ENCODE measurements at regions of chr22 and their contacts with region 1.

Region 1: GRCh38 chr22:31080848-31081649 is at the start of gene SMTN:
- DNase-seq: peak; percentile 87
- H3K4me3 Mint-ChIP-seq: peak within 1 kb of the TSS; percentile 84
- H3K27ac Mint-ChIP-seq: peak within 1 kb of the TSS; percentile 70
- H3K4me1 Mint-ChIP-seq: peaks cover 31% of the 10 kb centered on the region
- H3K27me3 Mint-ChIP-seq: no peaks in the 10 kb centered on the region
- total RNA-seq, gene SMTN: 27.0 and 28.9 TPM in 2 replicates

Region 2: GRCh38 chr22:30634471-30635233 is 446.4 kb before region 1 on chr22:
- intact Hi-C with region 1: loop called (anchors 2 kb)
- DNase-seq: peak; percentile 81
- H3K4me3 Mint-ChIP-seq: peak overlapping the region; percentile 75
- H3K27ac Mint-ChIP-seq: peak overlapping the region; percentile 93
- H3K4me1 Mint-ChIP-seq: peaks cover 23% of the 10 kb centered on the region
- H3K27me3 Mint-ChIP-seq: no peaks in the 10 kb centered on the region

Region 3: GRCh38 chr22:30742291-30743256 is 338.5 kb before region 1 on chr22:
- intact Hi-C with region 1: loop called (anchors 5 kb)
- DNase-seq: no peak
- H3K4me3 Mint-ChIP-seq: peak overlapping the region; percentile 31
- H3K27ac Mint-ChIP-seq: peak overlapping the region; percentile 96
- H3K4me1 Mint-ChIP-seq: peaks cover 65% of the 10 kb centered on the region
- H3K27me3 Mint-ChIP-seq: no peaks in the 10 kb centered on the region

Region 4: GRCh38 chr22:30763815-30764686 is 317.0 kb before region 1 on chr22:
- intact Hi-C with region 1: loop called (anchors 2 kb)
- DNase-seq: peak; percentile 36
- H3K4me3 Mint-ChIP-seq: no peak overlapping the region
- H3K27ac Mint-ChIP-seq: no peak overlapping the region
- H3K4me1 Mint-ChIP-seq: peaks cover 2% of the 10 kb centered on the region
- H3K27me3 Mint-ChIP-seq: peaks cover 2% of the 10 kb centered on the region

Region 5: DNA sequence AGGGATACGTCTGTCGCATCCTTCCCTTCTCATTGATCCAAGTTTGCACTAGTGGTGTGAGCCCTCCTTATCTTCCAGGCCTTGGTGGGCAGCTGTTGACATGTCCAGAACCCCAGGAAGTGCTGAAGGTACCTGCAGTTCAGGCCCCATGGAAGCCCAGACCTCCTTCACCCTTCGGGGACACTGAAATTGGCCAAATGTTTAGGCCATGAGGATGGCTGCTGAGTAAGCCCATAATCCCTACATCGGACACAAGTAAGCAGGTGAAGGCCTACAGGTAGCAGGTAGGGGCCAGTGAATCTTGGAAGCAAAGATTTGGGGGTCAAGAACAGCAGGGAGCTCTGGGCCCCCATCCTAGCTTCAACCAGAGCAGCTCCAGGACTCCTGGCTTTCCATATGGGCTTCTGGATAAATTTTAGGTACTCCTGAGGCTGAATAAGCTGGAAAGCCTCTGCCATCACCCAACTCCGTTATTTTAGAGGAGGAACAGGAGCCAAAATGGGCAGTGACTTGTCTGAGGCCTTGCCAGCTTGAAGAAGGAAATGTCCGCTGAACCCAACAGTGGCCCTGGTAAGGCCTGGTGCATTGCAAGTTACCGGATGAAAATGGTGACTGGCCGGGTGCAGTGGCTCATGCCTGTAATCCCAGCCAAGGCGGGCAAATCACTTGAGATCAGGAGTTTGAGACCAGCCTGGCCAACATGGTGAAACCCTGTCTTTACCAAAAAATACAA is 157.7 kb before region 1 on chr22:
- intact Hi-C with region 1: no loop called
- DNase-seq: no peak
- H3K4me3 Mint-ChIP-seq: no peak overlapping the region
- H3K27ac Mint-ChIP-seq: no peak overlapping the region
- H3K4me1 Mint-ChIP-seq: peaks cover 15% of the 10 kb centered on the region
- H3K27me3 Mint-ChIP-seq: no peaks in the 10 kb centered on the region

Region 6: DNA sequence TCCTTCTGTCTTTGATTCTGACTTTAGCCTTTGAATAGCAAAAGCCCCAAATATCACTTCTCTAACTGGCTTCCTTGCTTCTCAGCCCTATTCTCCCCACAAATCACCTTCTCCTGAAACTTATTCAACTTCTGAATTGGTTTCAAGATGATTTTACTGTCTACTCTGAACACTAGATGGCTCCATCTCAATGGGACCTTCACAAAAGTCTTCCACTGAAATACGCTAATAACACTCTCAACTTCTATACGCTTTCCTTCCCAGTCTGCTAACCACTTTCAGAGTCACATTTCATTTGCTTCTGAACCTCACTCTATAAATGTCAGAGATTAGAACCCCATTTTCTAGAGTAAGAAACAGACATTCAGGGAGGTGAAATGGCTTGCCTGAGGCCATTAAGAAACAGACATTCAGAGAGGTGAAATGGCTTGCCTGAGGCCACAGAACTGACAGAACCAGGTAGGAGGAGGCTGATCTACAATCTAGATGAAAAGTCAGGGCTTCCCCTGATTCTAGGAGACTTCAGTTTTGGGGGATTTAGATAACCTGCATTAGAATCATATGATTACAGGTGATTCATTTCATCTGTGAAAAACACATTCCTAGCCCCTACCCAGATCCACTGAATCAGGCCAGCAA is 133.1 kb before region 1 on chr22:
- intact Hi-C with region 1: loop called (anchors 5 kb)
- DNase-seq: no peak
- H3K4me3 Mint-ChIP-seq: no peak overlapping the region
- H3K27ac Mint-ChIP-seq: no peak overlapping the region
- H3K4me1 Mint-ChIP-seq: peaks cover 26% of the 10 kb centered on the region
- H3K27me3 Mint-ChIP-seq: no peaks in the 10 kb centered on the region

Region 7: GRCh38 chr22:30968924-30969539 is 112.0 kb before region 1 on chr22 and contains the start of gene TUG1:
- intact Hi-C with region 1: loop called (anchors 1 kb)
- DNase-seq: peak; percentile 97
- H3K4me3 Mint-ChIP-seq: peak within 1 kb of the TSS; percentile 86
- H3K27ac Mint-ChIP-seq: peak within 1 kb of the TSS; percentile 93
- H3K4me1 Mint-ChIP-seq: peaks cover 25% of the 10 kb centered on the region
- H3K27me3 Mint-ChIP-seq: no peaks in the 10 kb centered on the region
- total RNA-seq, gene TUG1: 66.9 and 68.2 TPM in 2 replicates

Region 8: DNA sequence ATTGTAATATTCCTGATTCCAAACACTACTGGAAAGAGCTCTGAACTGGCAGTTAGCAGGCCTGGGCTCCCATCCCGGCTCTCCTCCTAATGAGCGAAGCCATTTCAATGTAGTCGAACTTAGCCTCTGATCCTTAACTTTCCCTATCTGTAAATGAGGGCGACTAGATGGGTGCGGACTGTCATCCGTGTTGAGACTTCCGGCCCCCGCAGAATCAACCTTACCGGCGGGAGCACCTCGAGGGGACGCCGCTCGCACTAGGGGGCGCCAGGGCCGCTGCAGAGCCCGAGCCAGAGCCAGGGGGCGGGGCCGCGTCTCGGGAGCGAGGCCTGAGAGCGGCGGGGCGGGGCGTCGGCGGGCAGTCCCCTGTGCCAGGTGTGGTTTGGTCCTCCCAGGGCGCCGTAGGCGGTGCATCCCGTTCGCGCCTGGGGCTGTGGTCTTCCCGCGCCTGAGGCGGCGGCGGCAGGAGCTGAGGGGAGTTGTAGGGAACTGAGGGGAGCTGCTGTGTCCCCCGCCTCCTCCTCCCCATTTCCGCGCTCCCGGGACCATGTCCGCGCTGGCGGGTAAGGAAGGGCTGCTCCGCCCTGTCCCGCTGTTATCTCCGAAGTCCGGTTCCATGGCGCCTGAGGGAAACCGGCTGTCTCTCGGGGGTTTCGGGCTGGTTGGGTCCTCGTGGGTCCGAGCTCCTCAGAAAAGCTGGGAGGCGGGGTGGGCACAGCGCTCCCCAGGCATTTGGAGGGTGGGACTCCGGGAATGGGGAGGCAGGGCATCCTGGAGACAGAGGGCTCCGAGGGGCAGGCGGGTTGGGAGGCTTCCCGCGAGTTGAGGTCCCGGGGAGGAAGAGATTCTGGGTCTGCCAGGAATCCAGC is 131.0 kb after region 1 on chr22 and contains the start of gene LIMK2:
- intact Hi-C with region 1: loop called (anchors 10 kb)
- DNase-seq: peak; percentile 95
- H3K4me3 Mint-ChIP-seq: peak within 1 kb of the TSS; percentile 85
- H3K27ac Mint-ChIP-seq: peak within 1 kb of the TSS; percentile 70
- H3K4me1 Mint-ChIP-seq: peaks cover 40% of the 10 kb centered on the region
- H3K27me3 Mint-ChIP-seq: no peaks in the 10 kb centered on the region
- total RNA-seq, gene LIMK2: 31.1 and 33.9 TPM in 2 replicates

Measured in activated T-helper 2 cell treated with anti-CD3 and anti-CD28 coated beads, Interferon-gamma antibody, Interleukin-2, Interleukin-4, amounts not matched to agents 10 μg/mL and 5 μg/mL and 100 μg/mL, durations not matched to agents 14 hours and 24 hours and 36 hours (primary cell).